ENCODE measurements at regions of chr1 and their contacts with region 1.

Region 1: DNA sequence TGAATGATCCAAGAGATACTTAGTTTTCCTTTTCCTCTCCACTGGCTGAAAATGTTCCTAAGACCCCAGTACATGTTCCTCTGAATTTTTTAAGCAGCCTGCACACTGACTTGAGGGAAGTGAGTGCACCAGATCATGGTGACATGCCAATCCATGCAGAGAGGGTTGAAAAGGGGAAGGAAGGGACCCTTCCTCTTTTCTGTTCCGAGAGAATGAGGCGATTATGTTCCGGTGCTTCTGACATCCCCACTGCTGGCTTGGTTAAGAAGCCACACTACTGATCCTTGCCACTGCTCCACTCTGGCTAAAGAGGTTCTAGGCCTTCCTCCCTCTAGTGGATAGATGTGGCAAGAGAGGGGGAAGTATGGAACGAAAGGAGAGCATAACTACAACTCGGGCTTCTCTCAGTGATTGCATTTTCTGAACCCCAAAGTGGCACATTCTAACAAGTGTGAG is 1.8 kb upstream of the CYB5R1 start:
- DNase-seq: peak in 1 of 2 donors; percentile 26
- ATAC-seq: peak in 2 of 4 donors; percentile 20 to 23
- H3K4me3 ChIP-seq: no peak overlapping the region
- H3K27ac ChIP-seq: peak overlapping the region; percentile 99
- H3K4me1 ChIP-seq: peaks cover 10% of the 10 kb centered on the region
- H3K27me3 ChIP-seq: no peaks in the 10 kb centered on the region
- CTCF ChIP-seq: peak; percentile 58

Region 2: DNA sequence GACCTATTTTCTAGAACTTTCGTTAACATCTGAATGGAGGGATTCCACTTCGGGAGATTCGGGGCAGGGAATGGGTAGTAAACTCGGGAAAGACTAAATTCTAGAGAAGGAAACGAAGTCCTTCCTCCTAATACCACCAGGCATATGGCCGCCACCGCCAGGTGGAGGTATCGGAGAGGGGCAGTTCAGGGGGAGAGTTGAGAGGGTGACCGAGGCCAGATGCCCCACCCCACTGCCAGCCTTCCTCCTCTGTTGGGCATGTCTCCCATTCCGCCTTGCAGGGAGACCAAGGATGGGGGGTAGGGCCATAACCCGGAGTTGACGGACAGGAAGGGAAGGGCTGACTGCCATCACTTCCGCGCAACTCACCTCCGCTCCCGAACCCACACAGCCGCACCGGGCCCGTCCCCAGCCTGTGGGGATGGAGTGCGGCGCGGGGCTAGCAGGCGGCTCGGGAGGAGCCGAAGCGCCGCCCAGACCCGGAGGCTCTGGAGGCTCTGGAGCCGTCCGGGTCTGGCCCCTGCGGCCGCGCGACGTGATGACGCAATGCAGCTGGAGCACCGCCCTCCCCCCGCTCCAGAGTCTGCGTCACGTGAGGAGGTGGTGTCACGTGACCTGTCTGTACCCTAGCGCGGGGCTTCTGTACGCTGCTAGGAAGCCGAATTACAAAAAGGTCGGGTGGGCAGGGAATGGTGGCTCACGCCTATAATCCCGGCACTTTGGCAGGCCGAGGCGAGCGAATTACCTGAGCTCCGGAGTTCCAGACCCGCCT is 42.0 kb before region 1 on chr1 and contains the start of gene KLHL12:
- intact Hi-C with region 1: loop called in 1 of 2 experiments (anchors 1 kb)
- DNase-seq: peak; percentile 96 to 98
- ATAC-seq: peak; percentile 97 to 99 (median 98)
- H3K4me3 ChIP-seq: peak within 1 kb of the TSS; percentile 84
- H3K27ac ChIP-seq: peak within 1 kb of the TSS; percentile 92
- H3K4me1 ChIP-seq: peaks cover 32% of the 10 kb centered on the region
- H3K27me3 ChIP-seq: no peaks in the 10 kb centered on the region
- CTCF ChIP-seq: peak; percentile 73
- total RNA-seq, gene KLHL12: 14.3 to 19.8 (median 16.1) TPM

Region 3: GRCh38 chr1:202957733-202958543 is 10.9 kb before region 1 on chr1 and contains the start of gene ADIPOR1:
- intact Hi-C with region 1: loop called in 1 of 2 experiments (anchors 2 kb)
- DNase-seq: peak; percentile 91 to 96
- ATAC-seq: peak; percentile 82 to 86 (median 83)
- H3K4me3 ChIP-seq: peak within 1 kb of the TSS; percentile 97
- H3K27ac ChIP-seq: peak within 1 kb of the TSS; percentile 99
- H3K4me1 ChIP-seq: peaks cover 83% of the 10 kb centered on the region
- H3K27me3 ChIP-seq: no peaks in the 10 kb centered on the region
- CTCF ChIP-seq: no peak
- total RNA-seq, gene ADIPOR1: 64.4 to 91.0 (median 72.1) TPM

Region 4: DNA sequence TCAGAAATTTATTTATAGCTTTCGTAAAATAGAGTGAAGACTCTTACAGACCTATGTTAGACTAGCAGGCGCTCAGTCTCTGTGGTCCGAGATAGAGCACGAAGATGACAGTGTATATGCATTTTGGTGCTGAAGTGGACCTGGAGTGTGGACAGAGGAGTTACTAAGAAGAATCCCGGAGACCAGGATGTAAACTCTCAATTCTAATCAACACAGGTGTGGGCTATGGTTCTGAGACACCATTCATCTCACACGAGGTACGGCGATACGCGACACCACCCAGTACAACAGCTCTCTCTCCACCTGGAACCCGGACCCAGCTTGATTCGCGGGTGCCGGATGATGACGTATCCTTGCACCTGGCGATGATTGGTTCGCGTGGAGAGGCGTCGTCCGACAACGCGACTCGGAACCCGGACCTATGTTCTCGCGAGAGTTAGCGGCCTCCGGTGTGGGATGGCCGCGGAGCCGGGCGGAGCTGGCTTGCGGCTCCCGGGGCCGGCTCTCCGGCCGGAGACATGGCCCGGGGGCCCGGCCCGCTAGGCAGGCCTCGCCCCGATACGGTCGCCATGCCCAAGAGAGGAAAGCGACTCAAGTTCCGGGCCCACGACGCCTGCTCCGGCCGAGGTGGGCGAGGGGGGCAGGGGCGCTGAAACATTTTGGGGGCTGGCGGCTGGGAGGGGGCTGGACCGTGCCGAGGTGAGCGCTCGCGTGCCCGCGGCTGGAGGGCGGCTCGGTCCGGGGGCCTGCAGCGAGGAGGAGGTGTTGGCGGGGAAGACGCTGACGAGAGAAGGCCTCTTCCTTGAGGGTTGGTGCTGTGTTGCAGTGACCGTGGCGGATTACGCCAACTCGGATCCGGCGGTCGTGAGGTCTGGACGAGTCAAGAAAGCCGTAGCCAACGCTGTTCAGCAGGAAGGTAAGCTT is 38.3 kb after region 1 on chr1 and contains the start of gene TMEM183A:
- intact Hi-C with region 1: loop called (anchors 5 kb)
- DNase-seq: peak; percentile 96 to 98
- ATAC-seq: peak; percentile 98 to 99 (median 98)
- H3K4me3 ChIP-seq: peak within 1 kb of the TSS; percentile 74
- H3K27ac ChIP-seq: peak within 1 kb of the TSS; percentile 90
- H3K4me1 ChIP-seq: peaks cover 14% of the 10 kb centered on the region
- H3K27me3 ChIP-seq: no peaks in the 10 kb centered on the region
- CTCF ChIP-seq: no peak
- total RNA-seq, gene TMEM183A: 17.1 to 25.6 (median 19.2) TPM

Measured in psoas muscle (tissue), 8 donors.